Naive thymus-derived CD4-positive, alpha-beta T cell (primary cell): ENCODE measurements at regions of chr11 and their contacts with region 1.

Region 1: GRCh38 chr11:110199184-110199941 is 97.1 kb downstream of the RDX start:
- DNase-seq: no peak
- ATAC-seq: no peak
- H3K4me3 ChIP-seq: no peak overlapping the region
- H3K4me3 Mint-ChIP-seq: no peak overlapping the region
- H3K27ac ChIP-seq: no peak overlapping the region
- H3K27ac Mint-ChIP-seq: no peak overlapping the region
- H3K4me1 ChIP-seq: no peaks in the 10 kb centered on the region
- H3K4me1 Mint-ChIP-seq: peaks cover 0 to 4% (median 0%) of the 10 kb centered on the region in 7 donors
- H3K27me3 ChIP-seq: no peaks in the 10 kb centered on the region
- H3K27me3 Mint-ChIP-seq: peaks cover 0 to 9% (median 2%) of the 10 kb centered on the region in 5 donors

Region 2: DNA sequence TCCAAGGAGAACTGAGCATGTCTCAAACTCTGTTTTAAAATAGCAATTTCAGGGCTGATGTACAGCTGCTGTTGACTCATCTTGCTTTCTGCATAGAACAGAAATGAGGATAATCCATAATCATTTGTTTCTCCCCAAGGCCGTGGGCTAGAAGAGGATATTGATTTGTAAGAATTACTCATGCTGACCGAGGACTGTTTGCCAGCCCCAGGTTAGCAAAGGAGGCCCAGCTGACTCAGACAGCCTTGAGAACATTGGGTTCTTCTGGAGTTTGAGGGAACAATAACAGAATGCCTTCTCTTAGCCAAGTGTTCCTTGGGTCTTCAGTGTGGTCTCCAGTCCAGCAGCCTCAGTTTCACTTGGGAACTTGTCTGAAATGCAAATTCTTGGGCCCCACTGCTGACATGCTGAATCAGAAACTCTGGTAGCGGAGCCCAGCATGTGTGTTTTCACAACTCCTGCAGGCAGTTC is 14.2 kb before region 1 on chr11:
- CTCF ChIA-PET with region 1: no interaction called
- POLR2A ChIA-PET with region 1: no interaction called
- intact Hi-C with region 1: no loop called
- DNase-seq: no peak
- ATAC-seq: no peak
- H3K4me3 ChIP-seq: no peak overlapping the region
- H3K4me3 Mint-ChIP-seq: no peak overlapping the region
- H3K27ac ChIP-seq: no peak overlapping the region
- H3K27ac Mint-ChIP-seq: no peak overlapping the region
- H3K4me1 ChIP-seq: no peaks in the 10 kb centered on the region
- H3K4me1 Mint-ChIP-seq: no peaks in the 10 kb centered on the region
- H3K27me3 ChIP-seq: no peaks in the 10 kb centered on the region
- H3K27me3 Mint-ChIP-seq: peaks cover 0 to 16% (median 5%) of the 10 kb centered on the region in 5 donors

Region 3: GRCh38 chr11:110251837-110252236 is 52.5 kb after region 1 on chr11:
- CTCF ChIA-PET with region 1: no interaction called
- POLR2A ChIA-PET with region 1: no interaction called
- intact Hi-C with region 1: loop called (anchors 1 to 5 kb)
- DNase-seq: no peak
- ATAC-seq: no peak
- H3K4me3 ChIP-seq: no peak overlapping the region
- H3K4me3 Mint-ChIP-seq: no peak overlapping the region
- H3K27ac ChIP-seq: no peak overlapping the region
- H3K27ac Mint-ChIP-seq: no peak overlapping the region
- H3K4me1 ChIP-seq: no peaks in the 10 kb centered on the region
- H3K4me1 Mint-ChIP-seq: peaks cover 0 to 12% (median 0%) of the 10 kb centered on the region in 7 donors
- H3K27me3 ChIP-seq: no peaks in the 10 kb centered on the region
- H3K27me3 Mint-ChIP-seq: no peaks in the 10 kb centered on the region

Region 4: DNA sequence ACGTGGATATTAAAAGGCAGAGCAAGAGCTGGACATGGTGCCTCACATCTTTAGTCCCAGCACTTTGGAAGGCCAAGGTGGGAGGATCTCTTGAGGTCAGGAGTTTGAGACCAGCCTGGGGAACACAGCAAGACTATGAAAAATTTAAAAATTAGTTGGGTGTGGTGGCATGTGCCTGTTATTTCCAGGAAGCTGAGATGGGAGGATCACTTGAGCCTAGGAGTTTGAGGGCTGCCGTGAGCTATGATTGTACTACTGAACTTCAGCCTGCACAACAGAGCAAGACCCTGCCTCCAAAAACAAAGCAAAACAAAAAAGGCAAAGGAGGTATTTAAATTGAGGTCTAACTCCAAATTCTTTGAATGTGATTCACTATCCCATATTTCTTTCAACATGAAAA is 73.6 kb after region 1 on chr11:
- CTCF ChIA-PET with region 1: no interaction called
- POLR2A ChIA-PET with region 1: no interaction called
- intact Hi-C with region 1: no loop called
- DNase-seq: no peak
- ATAC-seq: no peak
- H3K4me3 ChIP-seq: no peak overlapping the region
- H3K4me3 Mint-ChIP-seq: no peak overlapping the region
- H3K27ac ChIP-seq: no peak overlapping the region
- H3K27ac Mint-ChIP-seq: no peak overlapping the region
- H3K4me1 ChIP-seq: no peaks in the 10 kb centered on the region
- H3K4me1 Mint-ChIP-seq: peaks cover 0 to 33% (median 0%) of the 10 kb centered on the region in 7 donors
- H3K27me3 ChIP-seq: no peaks in the 10 kb centered on the region
- H3K27me3 Mint-ChIP-seq: no peaks in the 10 kb centered on the region

Region 5: DNA sequence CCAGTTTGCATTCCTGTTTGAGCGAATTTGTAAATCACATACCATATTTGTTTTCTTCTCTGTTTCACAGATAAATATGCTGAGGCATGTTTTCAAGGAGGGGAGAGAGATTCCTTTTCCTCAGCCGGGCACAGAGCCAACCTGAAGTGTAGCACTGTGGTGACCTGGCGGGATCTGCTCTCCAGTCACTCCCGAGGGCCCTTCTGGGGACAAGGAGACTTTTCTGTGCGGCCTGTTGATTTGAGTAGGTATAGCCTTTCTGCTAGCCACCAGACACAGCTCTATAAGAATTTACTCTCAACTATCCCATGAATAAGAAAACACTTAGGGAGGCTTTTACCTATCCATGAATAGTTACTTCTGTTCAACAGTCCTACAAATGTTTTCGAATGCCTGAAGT is 166.9 kb after region 1 on chr11:
- CTCF ChIA-PET with region 1: interaction called, 7 read pairs
- POLR2A ChIA-PET with region 1: no interaction called
- intact Hi-C with region 1: loop called (anchors 1 kb)
- DNase-seq: no peak
- ATAC-seq: no peak
- H3K4me3 ChIP-seq: no peak overlapping the region
- H3K4me3 Mint-ChIP-seq: no peak overlapping the region
- H3K27ac ChIP-seq: no peak overlapping the region
- H3K27ac Mint-ChIP-seq: no peak overlapping the region
- H3K4me1 ChIP-seq: no peaks in the 10 kb centered on the region
- H3K4me1 Mint-ChIP-seq: peaks cover 0 to 15% (median 0%) of the 10 kb centered on the region in 7 donors
- H3K27me3 ChIP-seq: no peaks in the 10 kb centered on the region
- H3K27me3 Mint-ChIP-seq: peaks cover 0 to 10% (median 0%) of the 10 kb centered on the region in 5 donors